PC-9 (cell line): ENCODE measurements at regions of chr11 and their contacts with region 1.

Region 1: GRCh38 chr11:75400146-75400865 is 988 bp downstream of the RPS3 start:
- DNase-seq: peak in 1 of 2 experiments; percentile 37
- H3K4me3 ChIP-seq: peak overlapping the region; percentile 95
- H3K27ac ChIP-seq: peak overlapping the region; percentile 95
- H3K4me1 ChIP-seq: peaks cover 28% of the 10 kb centered on the region
- H3K27me3 ChIP-seq: no peaks in the 10 kb centered on the region
- CTCF ChIP-seq: no peak

Region 2: DNA sequence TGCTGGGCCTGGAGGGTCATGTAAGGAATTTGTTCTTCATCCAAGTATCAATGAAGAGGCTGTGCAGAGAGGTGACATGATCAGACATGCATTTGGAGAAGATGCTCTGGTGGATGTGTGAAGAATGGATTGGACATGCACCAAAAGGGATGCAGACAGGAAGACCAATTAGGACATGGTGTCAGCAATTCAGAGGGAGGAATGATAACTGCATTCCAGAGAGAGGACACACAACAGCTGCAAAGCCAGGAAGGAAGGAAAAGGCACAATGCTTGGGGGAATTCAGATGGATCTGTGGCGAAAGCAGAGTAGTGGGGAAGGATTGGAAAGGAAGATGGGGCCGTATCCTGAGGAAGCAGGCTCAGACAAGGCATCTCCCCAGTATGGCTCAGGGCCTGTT is 43.7 kb before region 1 on chr11:
- CTCF ChIA-PET with region 1: no interaction called
- POLR2A ChIA-PET with region 1: no interaction called
- intact Hi-C with region 1: no loop called
- DNase-seq: no peak
- H3K4me3 ChIP-seq: no peak overlapping the region
- H3K27ac ChIP-seq: no peak overlapping the region
- H3K4me1 ChIP-seq: peaks cover 16% of the 10 kb centered on the region
- H3K27me3 ChIP-seq: no peaks in the 10 kb centered on the region
- CTCF ChIP-seq: no peak

Region 3: GRCh38 chr11:76008474-76008873 is 608.2 kb after region 1 on chr11:
- CTCF ChIA-PET with region 1: no interaction called
- POLR2A ChIA-PET with region 1: interaction called, 11 read pairs
- intact Hi-C with region 1: no loop called
- DNase-seq: no peak
- H3K4me3 ChIP-seq: no peak overlapping the region
- H3K27ac ChIP-seq: no peak overlapping the region
- H3K4me1 ChIP-seq: no peaks in the 10 kb centered on the region
- H3K27me3 ChIP-seq: no peaks in the 10 kb centered on the region
- CTCF ChIP-seq: no peak